ENCODE measurements at regions of chr12 and their contacts with region 1.

Region 1: GRCh38 chr12:10235761-10236631 is 23.3 kb downstream of the GABARAPL1 start:
- DNase-seq: peak; percentile 58
- ATAC-seq: peak; percentile 82
- H3K4me3 Mint-ChIP-seq: no peak overlapping the region
- H3K27ac Mint-ChIP-seq: peak overlapping the region; percentile 32
- H3K4me1 Mint-ChIP-seq: peaks cover 10% of the 10 kb centered on the region
- H3K27me3 Mint-ChIP-seq: no peaks in the 10 kb centered on the region
- CTCF ChIP-seq: peak; percentile 96

Region 2: DNA sequence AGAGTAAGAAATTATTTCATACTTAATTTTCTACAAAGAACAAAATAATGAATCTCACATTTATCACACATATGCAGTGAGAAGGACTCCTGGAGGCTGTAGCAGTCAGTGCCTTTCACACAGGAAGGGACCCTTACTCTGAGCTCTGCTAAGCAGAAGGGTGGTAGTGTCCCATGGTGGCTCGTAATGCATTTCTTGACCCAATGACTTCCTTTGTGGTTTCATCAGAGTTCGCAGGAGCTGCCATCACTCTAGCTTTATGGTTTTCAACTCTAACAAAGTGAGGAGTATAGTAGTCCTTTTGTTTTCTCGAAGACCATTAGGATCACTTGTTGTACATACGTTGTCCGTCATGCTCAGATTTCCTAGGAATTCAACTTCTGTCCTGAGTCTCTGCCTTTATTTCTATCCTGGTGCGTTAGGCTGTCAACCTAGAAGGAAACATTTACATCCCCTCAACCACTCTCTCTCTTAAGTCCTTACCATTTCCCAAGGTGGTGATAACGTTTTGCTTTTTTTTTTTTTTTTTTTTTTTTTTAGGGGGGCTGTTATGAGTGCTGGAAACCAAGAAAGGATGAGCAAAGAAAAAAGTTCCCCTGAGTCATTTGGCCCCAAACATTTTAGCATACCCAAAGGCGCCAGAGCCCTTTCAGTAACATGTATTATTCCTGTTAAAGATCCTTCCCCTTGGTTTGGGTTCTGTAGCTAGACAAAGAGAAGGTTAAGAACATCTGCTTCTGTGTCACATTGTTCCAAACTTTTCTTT is 13.9 kb after region 1 on chr12:
- CTCF ChIA-PET with region 1: interaction called, 14 read pairs
- POLR2A ChIA-PET with region 1: no interaction called
- intact Hi-C with region 1: no loop called
- DNase-seq: peak; percentile 42
- ATAC-seq: peak; percentile 77
- H3K4me3 Mint-ChIP-seq: peak overlapping the region; percentile 32
- H3K27ac Mint-ChIP-seq: peak overlapping the region; percentile 80
- H3K4me1 Mint-ChIP-seq: peaks cover 28% of the 10 kb centered on the region
- H3K27me3 Mint-ChIP-seq: no peaks in the 10 kb centered on the region
- CTCF ChIP-seq: no peak

Region 3: GRCh38 chr12:10331642-10332239 is 95.7 kb after region 1 on chr12:
- CTCF ChIA-PET with region 1: interaction called, 16 read pairs
- POLR2A ChIA-PET with region 1: no interaction called
- intact Hi-C with region 1: no loop called
- DNase-seq: no peak
- ATAC-seq: peak; percentile 82
- H3K4me3 Mint-ChIP-seq: no peak overlapping the region
- H3K27ac Mint-ChIP-seq: no peak overlapping the region
- H3K4me1 Mint-ChIP-seq: peaks cover 18% of the 10 kb centered on the region
- H3K27me3 Mint-ChIP-seq: no peaks in the 10 kb centered on the region
- CTCF ChIP-seq: peak; percentile 79

Region 4: DNA sequence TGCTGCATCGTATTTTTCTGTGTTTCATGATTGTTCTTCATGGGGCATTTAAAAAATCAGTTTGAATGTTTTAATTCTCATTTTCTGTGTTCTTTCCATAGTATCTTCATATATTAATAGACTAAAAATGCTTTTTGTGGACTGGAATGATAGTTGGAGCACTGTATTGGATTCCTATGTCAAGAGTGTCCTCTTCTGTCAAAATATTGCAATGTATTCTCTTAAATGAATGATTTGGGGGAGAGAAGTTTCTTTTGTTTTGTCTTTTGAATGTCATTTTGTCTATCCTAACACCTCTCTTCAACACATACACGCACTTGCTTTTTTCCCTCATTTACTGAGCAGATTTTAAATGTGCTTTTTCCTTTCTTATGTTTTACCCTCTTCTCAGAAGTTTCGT is 265.0 kb after region 1 on chr12:
- CTCF ChIA-PET with region 1: interaction called, 11 read pairs
- POLR2A ChIA-PET with region 1: no interaction called
- intact Hi-C with region 1: loop called (anchors 5 kb)
- DNase-seq: no peak
- ATAC-seq: no peak
- H3K4me3 Mint-ChIP-seq: peak overlapping the region; percentile 47
- H3K27ac Mint-ChIP-seq: peak overlapping the region; percentile 78
- H3K4me1 Mint-ChIP-seq: peaks cover 65% of the 10 kb centered on the region
- H3K27me3 Mint-ChIP-seq: no peaks in the 10 kb centered on the region
- CTCF ChIP-seq: peak; percentile 38

Region 5: DNA sequence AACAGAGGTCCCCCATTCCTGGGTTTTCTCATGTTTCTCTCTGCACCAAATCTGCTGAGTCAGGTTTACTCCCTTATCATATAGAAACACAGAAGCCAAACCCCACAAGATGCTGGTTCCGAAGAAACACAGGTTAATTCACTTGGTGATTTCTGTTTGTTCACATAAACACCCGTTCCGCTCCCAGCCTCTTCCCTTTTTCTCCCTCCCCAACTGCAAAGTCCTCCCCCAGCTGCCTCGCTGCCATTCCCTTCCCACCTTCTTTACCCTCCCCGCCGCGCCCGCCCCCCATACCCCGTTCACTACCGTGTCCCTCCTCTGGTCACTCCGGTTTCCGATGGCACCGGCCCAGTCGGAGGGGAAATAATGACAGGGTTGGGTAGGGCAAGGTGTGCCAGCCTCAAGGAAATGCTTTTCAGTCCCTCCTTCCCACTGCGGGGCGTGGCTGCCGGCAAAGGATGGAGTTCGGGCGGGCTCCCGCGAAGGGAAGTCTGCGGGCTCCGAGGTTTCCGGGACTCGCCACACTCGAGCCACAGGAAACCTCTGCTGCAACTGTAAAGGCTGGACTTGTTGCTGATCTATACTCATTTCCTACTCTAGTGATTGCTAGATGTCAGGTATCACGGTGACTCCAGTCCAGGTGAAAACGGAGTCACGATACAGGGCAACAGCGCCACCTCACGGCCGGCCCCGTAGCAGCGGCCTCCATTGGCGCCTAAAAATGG is 437.8 kb after region 1 on chr12 and contains the start of gene STYK1:
- CTCF ChIA-PET with region 1: interaction called, 6 read pairs
- POLR2A ChIA-PET with region 1: no interaction called
- intact Hi-C with region 1: loop called (anchors 2 kb)
- DNase-seq: peak; percentile 84
- ATAC-seq: peak; percentile 81
- H3K4me3 Mint-ChIP-seq: peak within 1 kb of the TSS; percentile 71
- H3K27ac Mint-ChIP-seq: peak within 1 kb of the TSS; percentile 76
- H3K4me1 Mint-ChIP-seq: peaks cover 39% of the 10 kb centered on the region
- H3K27me3 Mint-ChIP-seq: peaks cover 20% of the 10 kb centered on the region
- CTCF ChIP-seq: peak; percentile 99
- total RNA-seq, gene STYK1: 0.70 to 1.1 TPM

Measured in activated CD8-positive, alpha-beta T cell treated with anti-CD3 and anti-CD28 coated beads for 36 hours (primary cell).